Posterior cingulate gyrus (tissue), 11 donors: ENCODE measurements at regions of chr7 and their contacts with region 1.

Region 1: DNA sequence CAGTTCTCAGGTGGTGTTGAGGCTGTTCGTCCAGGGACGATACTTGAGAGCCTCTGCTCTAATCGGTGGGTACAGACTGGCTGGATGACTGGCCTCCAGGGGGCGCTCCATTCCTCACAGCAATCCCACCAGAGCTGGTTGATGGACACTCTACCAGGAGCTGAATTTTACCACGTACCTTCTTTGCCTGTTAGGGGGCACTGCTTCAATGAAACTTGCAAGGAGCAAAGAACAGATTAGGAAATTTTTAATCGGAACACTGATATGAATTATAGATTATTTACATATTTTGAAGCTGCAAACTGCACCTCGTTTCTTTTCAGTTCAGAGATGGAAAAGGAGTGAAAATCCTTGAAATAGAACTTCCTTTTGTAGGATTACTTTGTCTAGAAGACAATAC is 44.9 kb downstream of the KBTBD2 start:
- DNase-seq: peak; percentile 66 to 94 (median 83)

Region 2: DNA sequence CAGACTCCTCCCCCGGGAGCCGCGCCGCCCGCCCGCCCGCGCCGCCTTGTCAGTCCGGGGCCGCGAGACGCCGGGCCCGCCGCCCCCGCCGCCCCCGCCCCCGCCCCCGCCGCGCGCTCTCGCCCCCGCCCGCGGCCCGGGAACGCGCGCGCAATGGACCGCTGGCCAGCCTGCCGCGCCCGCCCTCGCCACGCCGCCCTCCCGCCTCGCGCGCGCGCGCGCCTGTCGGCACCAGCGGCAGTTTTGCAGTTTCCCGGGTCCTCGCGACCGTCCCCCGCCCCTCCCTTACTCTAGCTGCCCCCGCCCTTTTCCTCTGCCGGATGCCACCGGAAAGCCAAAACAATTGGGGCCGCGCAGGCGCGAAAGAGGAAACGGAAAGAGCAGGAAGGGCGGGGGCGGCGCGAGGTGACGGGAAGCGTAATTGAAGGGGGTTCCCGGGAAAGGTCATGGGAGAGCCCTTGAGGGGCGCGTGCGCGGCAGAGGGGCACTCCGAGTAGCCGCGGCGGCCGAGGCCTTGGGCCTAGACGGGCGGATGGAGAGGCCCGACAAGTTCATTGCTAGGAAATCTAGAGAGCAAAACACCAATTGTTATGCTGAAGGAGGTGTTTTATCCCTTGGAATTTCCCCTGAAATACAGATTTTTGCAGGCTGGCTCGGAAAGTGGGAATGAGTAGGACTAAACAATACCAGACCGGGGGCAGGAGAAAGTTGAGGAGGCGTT is 45.3 kb after region 1 on chr7:
- intact Hi-C with region 1: loop called (anchors 5 kb)
- DNase-seq: peak; percentile 93 to 99 (median 94)